ENCODE measurements at regions of chr10 and their contacts with region 1.

Region 1: GRCh38 chr10:92142949-92143348 is 147.9 kb downstream of the CPEB3 start:
- DNase-seq: no peak
- ATAC-seq: peak; percentile 69; the same call in 1 of the 2 replicates
- H3K4me3 ChIP-seq: no peak overlapping the region
- H3K27ac ChIP-seq: peak overlapping the region; percentile 57; the same call in 1 of the 2 replicates
- H3K4me1 ChIP-seq: peaks cover 21% of the 10 kb centered on the region
- H3K27me3 ChIP-seq: no peaks in the 10 kb centered on the region
- CTCF ChIP-seq: no peak

Region 2: GRCh38 chr10:91856637-91857036 is 286.3 kb before region 1 on chr10:
- CTCF ChIA-PET with region 1: no interaction called
- POLR2A ChIA-PET with region 1: no interaction called
- in situ Hi-C with region 1: no loop called
- intact Hi-C with region 1: no loop called
- DNase-seq: peak; percentile 8
- ATAC-seq: no peak
- H3K4me3 ChIP-seq: no peak overlapping the region
- H3K27ac ChIP-seq: no peak overlapping the region
- H3K4me1 ChIP-seq: no peaks in the 10 kb centered on the region
- H3K27me3 ChIP-seq: no peaks in the 10 kb centered on the region
- CTCF ChIP-seq: peak; percentile 69; the same call in 1 of the 2 replicates

Region 3: DNA sequence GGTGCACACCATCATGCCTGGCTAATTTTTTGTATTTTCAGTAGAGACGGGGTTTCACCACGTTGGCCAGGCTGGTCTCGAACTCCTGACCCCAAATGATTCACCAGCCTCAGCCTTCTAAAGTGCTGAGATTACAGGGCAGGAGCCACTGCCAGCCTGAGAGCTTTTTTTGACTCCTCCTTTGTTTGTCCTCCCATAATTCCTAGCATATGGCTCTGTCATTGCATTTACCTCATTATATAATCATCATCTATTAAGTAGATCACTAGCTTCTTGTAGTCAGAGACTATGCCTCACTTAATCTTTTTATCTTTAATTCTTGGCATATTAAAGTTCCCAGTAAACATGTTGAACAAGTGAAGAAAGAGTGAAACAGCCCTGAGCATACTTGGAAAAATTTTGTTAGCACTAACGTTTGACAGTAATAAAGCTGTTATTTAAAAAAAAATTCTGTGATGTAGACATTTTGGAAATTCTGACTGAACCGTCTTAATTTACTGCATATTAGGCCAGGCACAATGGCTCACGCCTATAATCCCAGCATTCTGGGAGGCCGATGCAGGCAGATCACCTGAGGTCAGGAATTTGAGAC is 65.9 kb after region 1 on chr10:
- CTCF ChIA-PET with region 1: no interaction called
- POLR2A ChIA-PET with region 1: interaction called, 15 read pairs
- in situ Hi-C with region 1: no loop called
- intact Hi-C with region 1: no loop called
- DNase-seq: no peak
- ATAC-seq: no peak
- H3K4me3 ChIP-seq: no peak overlapping the region
- H3K27ac ChIP-seq: no peak overlapping the region
- H3K4me1 ChIP-seq: no peaks in the 10 kb centered on the region
- H3K27me3 ChIP-seq: no peaks in the 10 kb centered on the region
- CTCF ChIP-seq: no peak